Adrenal gland (tissue), 19 donors: ENCODE measurements at regions of chr20 and their contacts with region 1.

Region 1: DNA sequence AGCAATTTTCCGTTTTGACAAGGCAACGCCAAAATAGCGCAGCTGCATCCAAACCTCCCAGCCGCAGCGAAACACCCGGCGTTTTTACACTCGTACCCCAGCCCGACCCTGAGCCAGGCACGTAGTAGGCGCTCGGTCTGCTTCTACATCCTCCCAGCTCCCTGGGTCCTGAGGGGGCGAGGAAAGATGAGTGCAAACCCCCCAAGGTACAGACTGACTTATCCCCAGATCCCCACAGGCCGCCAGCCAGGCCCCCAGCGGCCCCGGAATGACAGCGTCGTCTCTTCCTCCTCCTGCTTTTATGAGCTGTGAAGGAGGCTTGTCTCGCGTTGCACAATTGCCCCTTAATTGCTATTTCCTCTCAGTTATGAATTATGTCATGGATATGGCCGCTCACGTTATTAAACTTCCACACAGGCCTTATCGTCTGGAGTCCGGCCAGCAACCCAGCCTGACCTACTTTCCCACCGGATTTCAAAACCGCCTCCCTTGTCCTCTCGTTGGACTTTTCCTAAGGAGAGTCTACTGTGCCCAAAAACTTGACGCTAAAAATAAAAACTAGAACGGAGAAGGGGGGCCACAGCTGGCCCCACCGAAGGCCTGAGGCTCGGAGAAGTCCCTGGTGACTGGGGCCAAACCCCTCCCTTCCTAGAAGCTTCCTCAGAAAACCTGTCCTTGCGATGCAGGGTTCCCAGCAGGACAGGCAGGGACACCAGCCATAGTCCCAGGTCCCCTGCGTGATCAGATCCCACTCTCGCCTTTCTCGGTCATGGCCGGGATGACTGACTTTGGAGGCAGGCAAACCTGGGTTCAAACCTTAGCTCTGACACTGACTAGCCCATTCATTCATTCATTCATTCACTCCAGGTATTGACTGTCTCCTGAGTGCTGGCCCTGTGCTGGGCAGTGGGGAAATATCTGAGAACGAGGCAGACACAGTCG is 130.9 kb upstream of the PTPN1 start:
- DNase-seq: peak; percentile 92 to 99 (median 97)
- H3K4me3 ChIP-seq: peak overlapping the region in 1 of 4 donors; percentile 2
- H3K27ac ChIP-seq: peak overlapping the region; percentile 71 to 96 (median 86)
- H3K4me1 ChIP-seq: peaks cover 43 to 45% of the 10 kb centered on the region in 2 donors
- H3K27me3 ChIP-seq: no peaks in the 10 kb centered on the region
- CTCF ChIP-seq: peak in 1 of 6 experiments; percentile 18
- POLR2A ChIP-seq: peak; percentile 82 to 87

Region 2: DNA sequence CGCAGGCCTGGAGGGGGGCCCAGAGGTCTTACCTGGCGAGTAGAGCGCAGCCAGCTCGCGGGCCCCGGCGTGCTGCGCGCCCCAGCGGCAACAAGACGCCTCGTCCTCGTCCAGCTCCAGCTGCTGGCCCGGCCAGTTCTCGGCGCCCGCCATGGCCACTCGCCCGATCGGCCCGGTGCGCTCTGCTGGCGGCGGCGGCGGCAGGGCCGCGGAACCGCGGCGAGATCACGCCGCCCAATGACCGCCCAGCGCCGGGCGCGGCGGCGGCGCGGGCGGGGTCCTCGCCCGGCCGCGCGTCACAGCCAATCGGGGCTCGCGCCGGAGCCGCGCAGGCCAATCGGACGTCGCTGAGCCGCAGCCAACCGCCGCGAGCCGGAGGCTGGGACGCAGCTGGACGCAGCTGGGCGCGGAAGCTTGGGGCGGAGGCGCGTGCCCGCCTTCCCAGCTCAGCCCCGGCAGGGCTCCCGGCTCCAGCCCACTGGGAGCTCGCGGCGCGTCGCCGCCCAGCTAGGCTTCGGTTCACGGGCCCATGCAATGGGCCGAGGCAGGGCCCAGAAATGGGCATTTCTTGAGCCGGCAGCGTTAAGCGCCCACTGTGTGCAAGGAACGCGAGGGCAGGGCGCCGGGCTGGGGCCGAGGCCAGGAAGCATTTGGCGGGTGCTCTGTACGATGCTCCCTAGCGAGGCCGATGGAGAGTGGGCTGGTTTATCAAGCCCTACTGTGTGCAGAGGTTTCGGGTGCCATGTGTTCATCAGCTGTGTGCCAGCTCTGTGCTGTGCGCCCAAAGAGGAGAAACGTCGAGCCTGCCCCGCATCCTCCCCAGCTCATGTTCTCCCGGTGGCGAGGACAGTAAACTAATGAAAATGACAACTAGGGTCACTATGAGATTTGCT is 225.6 kb before region 1 on chr20 and contains the start of gene PEDS1:
- intact Hi-C with region 1: no loop called
- DNase-seq: peak; percentile 90 to 93 (median 92)
- H3K4me3 ChIP-seq: peak within 1 kb of the TSS; percentile 28 to 93 (median 83)
- H3K27ac ChIP-seq: peak within 1 kb of the TSS; percentile 39 to 96 (median 87)
- H3K4me1 ChIP-seq: peaks cover 24 to 36% of the 10 kb centered on the region in 2 donors
- H3K27me3 ChIP-seq: no peaks in the 10 kb centered on the region
- CTCF ChIP-seq: peak in 1 of 6 experiments; percentile 34
- POLR2A ChIP-seq: peak; percentile 89 to 95
- total RNA-seq, gene PEDS1: 18.7 to 39.1 (median 29.2) TPM

Region 3: GRCh38 chr20:50308513-50309279 is 70.6 kb before region 1 on chr20:
- intact Hi-C with region 1: loop called (anchors 10 kb)
- DNase-seq: peak; percentile 89 to 98 (median 97)
- H3K4me3 ChIP-seq: peak overlapping the region in 1 of 4 donors; percentile 7
- H3K27ac ChIP-seq: peak overlapping the region; percentile 89 to 98 (median 97)
- H3K4me1 ChIP-seq: peaks cover 49 to 59% of the 10 kb centered on the region in 2 donors
- H3K27me3 ChIP-seq: no peaks in the 10 kb centered on the region
- CTCF ChIP-seq: peak in 2 of 6 experiments; percentile 14 to 23
- POLR2A ChIP-seq: peak; percentile 45 to 51

Region 4: DNA sequence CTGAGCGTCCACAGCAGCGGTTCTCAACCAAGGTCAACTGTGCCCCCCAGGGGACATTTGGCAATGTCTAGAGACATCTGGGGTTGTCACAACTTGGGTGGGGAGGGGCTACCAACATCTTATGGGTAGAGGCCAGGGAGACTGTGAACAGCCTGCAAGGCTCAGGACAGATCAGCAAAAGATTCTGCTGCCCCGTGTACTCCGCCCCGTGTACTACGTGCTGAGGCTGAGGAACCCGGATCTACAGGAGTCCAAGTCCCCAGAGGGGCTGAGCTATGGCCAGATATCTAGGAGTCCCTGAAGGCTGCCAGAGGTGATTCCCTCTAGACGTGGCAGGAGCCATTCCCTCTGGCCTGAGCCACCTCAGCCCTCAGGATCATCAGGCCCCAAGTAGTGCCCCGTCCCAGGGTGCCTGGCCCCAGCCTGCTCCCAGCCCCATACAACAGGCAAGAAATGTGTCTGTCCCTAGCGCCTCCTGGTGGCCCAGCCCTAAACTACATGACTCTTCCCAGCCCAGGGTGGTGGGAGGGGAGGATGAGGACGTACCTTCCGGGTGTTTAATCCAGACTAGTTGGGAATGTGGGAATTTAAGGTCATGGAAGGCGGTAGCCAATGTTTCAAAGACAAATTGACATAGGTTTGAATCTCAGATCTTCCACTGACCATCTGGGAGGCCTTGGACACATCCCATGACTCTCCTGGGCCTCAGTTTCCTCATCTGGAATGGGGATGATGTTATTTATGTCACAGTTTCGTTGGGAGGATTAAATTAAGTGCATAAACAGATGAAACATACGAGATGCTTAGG is 81.3 kb after region 1 on chr20:
- intact Hi-C with region 1: no loop called
- DNase-seq: peak; percentile 87 to 97 (median 92)
- H3K4me3 ChIP-seq: no peak overlapping the region
- H3K27ac ChIP-seq: peak overlapping the region in 4 of 5 donors; percentile 28 to 87 (median 43)
- H3K4me1 ChIP-seq: peaks cover 12 to 18% of the 10 kb centered on the region in 2 donors
- H3K27me3 ChIP-seq: no peaks in the 10 kb centered on the region
- CTCF ChIP-seq: peak; percentile 92 to 99 (median 98)
- POLR2A ChIP-seq: no peak